PC-3 (cell line): ENCODE measurements at regions of chr6 and their contacts with region 1.

Region 1: DNA sequence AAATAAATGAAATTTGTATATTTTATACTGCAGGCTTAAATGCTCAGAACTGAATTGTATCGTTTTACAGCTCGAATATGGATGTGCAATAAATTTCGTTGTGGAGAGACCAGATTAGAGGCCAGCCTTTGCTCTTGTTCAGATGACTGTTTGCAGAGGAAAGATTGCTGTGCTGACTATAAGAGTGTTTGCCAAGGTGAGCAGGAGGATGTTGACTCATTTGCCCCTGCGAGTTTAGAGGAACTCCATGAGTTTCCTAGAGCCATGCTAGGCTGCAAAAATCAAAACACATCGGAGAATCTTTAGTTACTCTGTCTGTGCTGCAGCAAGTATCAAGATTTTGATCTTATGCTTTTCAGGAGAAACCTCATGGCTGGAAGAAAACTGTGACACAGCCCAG is 15.4 kb downstream of the ENPP3 start:
- DNase-seq: peak; percentile 83
- ATAC-seq: peak; percentile 90
- H3K4me3 ChIP-seq: peak overlapping the region; percentile 50; the same call in 1 of the 2 replicates
- H3K27ac ChIP-seq: peak overlapping the region; percentile 97
- H3K4me1 ChIP-seq: peaks cover 37% of the 10 kb centered on the region
- H3K27me3 ChIP-seq: no peaks in the 10 kb centered on the region
- CTCF ChIP-seq: no peak

Region 2: DNA sequence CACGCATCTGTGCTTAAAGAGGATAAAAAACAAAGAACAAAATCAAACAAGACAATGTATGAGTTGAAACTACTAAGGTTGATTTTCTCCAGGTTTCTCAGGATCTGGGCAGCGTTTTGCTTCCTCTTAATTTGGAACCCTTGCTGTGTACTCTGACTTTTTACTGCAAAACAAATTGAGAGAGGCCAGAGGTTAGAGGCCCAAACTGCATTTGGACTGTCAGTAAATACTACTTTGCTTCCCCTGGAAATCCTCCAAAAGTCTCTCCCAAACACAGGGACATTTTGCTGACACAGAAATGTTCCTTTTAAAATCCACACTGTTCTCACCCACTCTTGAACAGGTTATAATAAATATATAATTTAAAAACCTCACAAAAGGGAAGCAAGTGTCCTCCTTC is 78.3 kb before region 1 on chr6:
- CTCF ChIA-PET with region 1: no interaction called
- POLR2A ChIA-PET with region 1: no interaction called
- intact Hi-C with region 1: no loop called
- DNase-seq: no peak
- ATAC-seq: no peak
- H3K4me3 ChIP-seq: no peak overlapping the region
- H3K27ac ChIP-seq: no peak overlapping the region
- H3K4me1 ChIP-seq: no peaks in the 10 kb centered on the region
- H3K27me3 ChIP-seq: no peaks in the 10 kb centered on the region
- CTCF ChIP-seq: no peak

Region 3: DNA sequence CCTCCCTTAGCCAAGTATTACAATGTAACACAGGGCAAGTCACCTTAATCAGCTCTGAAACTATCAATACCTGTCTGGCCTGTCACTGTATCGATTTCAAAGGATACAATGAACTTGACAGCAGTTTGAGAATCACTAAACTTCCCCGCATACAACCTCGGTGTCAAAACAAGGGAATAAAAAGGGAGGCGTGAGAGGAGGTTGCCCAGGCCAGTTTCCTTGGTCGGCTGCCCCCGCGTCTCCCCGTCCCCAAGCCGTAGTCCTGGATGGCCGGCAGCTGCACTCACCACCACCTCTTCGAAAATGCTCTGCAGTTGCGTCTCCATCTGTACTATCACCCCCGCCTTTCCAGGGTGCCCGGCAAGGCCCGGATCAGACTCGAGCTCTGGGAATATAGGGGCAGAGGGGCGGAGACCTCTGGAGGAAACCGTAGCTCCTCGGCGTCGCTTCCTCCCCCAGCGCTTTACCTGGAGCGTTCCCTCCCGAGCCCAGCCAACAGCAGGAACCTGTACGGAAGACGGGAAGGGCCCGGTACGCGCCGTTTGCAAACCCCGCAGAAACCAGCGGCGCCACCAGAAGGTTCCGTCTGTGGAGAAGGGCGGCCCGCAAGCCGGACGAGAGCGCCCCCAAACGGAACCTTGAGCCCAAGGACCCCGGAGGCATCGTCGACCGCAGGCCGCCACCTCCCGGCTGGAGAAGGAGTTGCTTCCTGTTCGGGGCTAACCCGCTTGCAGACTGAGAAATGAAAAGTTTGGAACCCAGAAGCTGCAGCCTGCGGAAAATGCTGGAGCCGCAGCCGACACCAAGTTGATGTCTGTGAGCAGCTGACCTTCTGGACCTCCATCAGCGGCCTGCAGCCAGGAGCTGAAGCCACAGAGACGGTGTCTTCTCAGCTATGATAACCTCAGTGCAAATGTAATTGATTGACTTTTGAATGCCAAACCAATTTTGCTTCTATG is 24.5 kb before region 1 on chr6 and contains the start of gene MED23:
- CTCF ChIA-PET with region 1: no interaction called
- POLR2A ChIA-PET with region 1: no interaction called
- intact Hi-C with region 1: loop called (anchors 2 kb)
- DNase-seq: peak; percentile 90
- ATAC-seq: peak; percentile 92
- H3K4me3 ChIP-seq: peak within 1 kb of the TSS; percentile 98
- H3K27ac ChIP-seq: peak within 1 kb of the TSS; percentile 63
- H3K4me1 ChIP-seq: peaks cover 39% of the 10 kb centered on the region
- H3K27me3 ChIP-seq: no peaks in the 10 kb centered on the region
- CTCF ChIP-seq: peak; percentile 93
- total RNA-seq, gene MED23: 15.4 and 18.1 TPM in 2 replicates